Gastrocnemius medialis (tissue), 4 donors: ENCODE measurements at regions of chr11 and their contacts with region 1.

Region 1: DNA sequence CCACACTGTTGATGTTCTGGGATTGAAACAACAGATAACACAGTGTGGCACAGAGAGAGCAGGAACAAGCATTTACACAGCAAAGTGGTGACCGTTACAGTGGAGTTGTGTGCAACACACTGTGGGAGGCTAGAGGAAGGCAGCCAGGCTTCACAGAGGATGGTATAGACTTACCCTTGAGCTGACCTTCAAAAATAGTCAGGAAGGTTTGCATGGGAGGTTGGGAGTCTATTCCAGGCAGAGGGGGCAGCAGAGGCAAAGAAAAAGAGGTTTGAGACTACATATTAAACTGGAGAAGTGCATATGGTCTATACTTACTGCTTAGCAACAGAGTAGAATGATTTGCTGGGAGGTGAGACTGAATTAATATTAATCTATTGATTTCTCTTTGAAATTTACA is 22.1 kb upstream of the FOLH1 start:
- DNase-seq: no peak
- ATAC-seq: no peak
- H3K4me3 ChIP-seq: no peak overlapping the region
- H3K27ac ChIP-seq: no peak overlapping the region
- H3K4me1 ChIP-seq: no peaks in the 10 kb centered on the region
- H3K27me3 ChIP-seq: no peaks in the 10 kb centered on the region
- CTCF ChIP-seq: no peak
- POLR2A ChIP-seq: no peak

Region 2: GRCh38 chr11:49533204-49533603 is 302.7 kb after region 1 on chr11:
- in situ Hi-C with region 1: no loop called
- intact Hi-C with region 1: loop called (anchors 5 kb)
- DNase-seq: no peak
- ATAC-seq: no peak
- H3K4me3 ChIP-seq: no peak overlapping the region
- H3K27ac ChIP-seq: no peak overlapping the region
- H3K4me1 ChIP-seq: no peaks in the 10 kb centered on the region
- H3K27me3 ChIP-seq: no peaks in the 10 kb centered on the region
- CTCF ChIP-seq: no peak
- POLR2A ChIP-seq: no peak